RWPE1 (cell line): ENCODE measurements at regions of chr15 and their contacts with region 1.

Region 1: DNA sequence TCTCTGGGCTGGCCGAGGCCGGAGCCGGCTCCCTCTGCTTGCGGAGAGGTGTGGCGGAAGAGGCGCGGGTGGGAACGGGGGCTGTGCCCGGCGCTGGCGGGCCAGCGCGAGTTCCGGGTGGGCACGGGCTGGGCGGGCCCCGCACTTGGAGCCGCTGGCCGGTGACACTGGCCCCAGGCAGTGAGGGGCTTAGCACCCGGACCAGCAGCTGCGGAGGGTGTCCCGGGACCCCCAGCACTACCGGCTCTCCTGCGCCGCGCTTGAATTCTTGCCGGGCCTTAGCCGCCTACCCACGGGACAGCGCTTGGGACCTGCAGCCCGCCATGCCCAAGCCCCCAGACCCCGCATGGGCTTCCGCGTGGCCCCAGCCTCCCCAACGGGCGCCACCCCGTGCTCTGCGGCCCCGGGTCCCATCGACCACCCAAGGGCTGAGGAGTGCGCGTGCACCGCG is 736.3 kb upstream of the ARRDC4 start:
- DNase-seq: no peak
- H3K27ac ChIP-seq: no peak overlapping the region
- CTCF ChIP-seq: no peak

Region 2: DNA sequence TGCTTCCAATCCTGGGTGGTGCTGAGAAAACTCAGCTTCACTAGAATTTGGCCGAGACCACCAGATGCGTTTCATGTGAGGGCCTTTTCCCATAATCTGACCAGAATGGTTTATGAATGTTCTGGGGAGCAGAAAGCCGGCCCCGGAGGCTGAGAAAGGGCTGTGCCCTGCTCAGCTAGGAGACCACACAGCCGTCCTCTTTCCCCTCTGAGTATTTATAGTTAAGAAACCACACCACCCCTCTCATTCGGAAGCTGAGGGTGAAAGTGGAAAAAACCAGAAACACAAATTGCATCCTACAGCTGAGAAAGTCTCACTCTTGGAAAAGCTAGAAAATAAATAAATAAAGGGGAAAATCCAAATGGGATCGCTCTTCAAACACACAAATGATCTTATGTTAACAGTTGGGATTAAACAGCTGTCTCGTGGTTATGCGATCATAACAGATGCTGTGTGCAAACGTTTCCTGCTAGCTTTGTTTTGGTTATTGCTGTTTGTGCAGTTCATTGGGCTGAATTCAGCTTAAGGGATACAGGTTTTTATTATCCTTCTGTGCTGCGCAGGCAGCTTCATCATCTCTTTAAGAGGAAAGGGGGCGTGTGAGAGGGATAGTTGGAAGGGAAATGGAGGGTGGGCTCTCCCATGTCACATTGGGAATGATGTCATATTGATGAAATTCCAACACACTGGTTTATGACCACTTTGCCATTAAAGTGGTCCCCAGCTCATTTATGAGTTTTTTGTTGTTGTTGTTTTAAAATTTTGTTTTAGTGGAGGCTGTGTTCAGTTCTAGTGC is 1919.9 kb before region 1 on chr15:
- CTCF ChIA-PET with region 1: no interaction called
- POLR2A ChIA-PET with region 1: interaction called, 12 read pairs
- DNase-seq: no peak
- H3K27ac ChIP-seq: no peak overlapping the region
- CTCF ChIP-seq: no peak

Region 3: DNA sequence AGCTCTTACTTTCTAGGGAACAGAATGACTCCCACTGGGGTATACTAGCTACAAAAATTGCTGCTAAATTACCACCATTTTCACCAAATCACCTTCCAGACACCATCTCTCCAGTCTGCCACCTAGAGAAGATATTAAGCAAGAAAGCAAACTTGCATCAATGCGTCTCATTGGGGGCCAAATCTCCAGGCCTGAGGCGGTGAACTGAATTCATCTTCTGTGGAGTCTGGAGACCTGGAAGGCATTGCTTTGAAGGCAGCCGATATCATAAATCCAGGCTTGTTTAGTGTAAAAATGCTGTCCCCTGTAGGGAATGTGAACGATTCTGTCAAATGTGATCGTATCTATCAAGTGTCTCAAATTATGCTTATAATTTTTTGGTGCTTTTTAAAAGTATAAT is 11.9 kb before region 1 on chr15:
- CTCF ChIA-PET with region 1: no interaction called
- POLR2A ChIA-PET with region 1: no interaction called
- DNase-seq: no peak
- H3K27ac ChIP-seq: no peak overlapping the region
- CTCF ChIP-seq: no peak

Region 4: GRCh38 chr15:97346251-97346650 is 122.0 kb after region 1 on chr15:
- CTCF ChIA-PET with region 1: no interaction called
- POLR2A ChIA-PET with region 1: no interaction called
- DNase-seq: no peak
- H3K27ac ChIP-seq: no peak overlapping the region
- CTCF ChIP-seq: no peak

Region 5: DNA sequence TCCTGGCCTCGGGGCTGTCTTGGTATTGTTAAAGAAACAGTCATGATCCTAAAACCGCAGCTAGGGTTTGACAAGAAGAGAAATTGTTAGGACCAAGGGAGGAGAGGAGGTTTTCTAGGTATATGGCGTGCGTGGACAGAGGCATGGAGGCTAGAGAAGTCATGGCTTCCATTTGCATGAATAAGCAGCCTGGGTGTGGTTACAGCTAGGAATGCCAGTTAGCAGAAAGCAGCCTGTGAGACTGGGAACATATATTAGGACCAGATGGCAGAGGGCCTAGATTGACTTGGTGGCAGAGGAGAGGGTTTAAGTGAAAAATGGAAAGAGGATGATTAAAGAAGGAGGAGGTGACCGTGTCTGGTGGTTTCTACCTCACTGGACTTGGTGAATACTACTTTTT is 162.7 kb after region 1 on chr15:
- CTCF ChIA-PET with region 1: no interaction called
- POLR2A ChIA-PET with region 1: no interaction called
- DNase-seq: no peak
- H3K27ac ChIP-seq: no peak overlapping the region
- CTCF ChIP-seq: no peak